Calu3 (cell line): ENCODE measurements at regions of chr19 and their contacts with region 1.

Region 1: GRCh38 chr19:3429581-3430080 is 50.7 kb downstream of the SMIM24 start:
- DNase-seq: peak; percentile 82
- H3K4me3 Mint-ChIP-seq: no peak overlapping the region
- H3K27ac Mint-ChIP-seq: no peak overlapping the region
- H3K4me1 Mint-ChIP-seq: no peaks in the 10 kb centered on the region
- H3K27me3 Mint-ChIP-seq: no peaks in the 10 kb centered on the region
- CTCF ChIP-seq: peak; percentile 90

Region 2: GRCh38 chr19:3234800-3235199 is 194.8 kb before region 1 on chr19:
- CTCF ChIA-PET with region 1: no interaction called
- intact Hi-C with region 1: no loop called
- DNase-seq: peak; percentile 26
- H3K4me3 Mint-ChIP-seq: no peak overlapping the region
- H3K27ac Mint-ChIP-seq: no peak overlapping the region
- H3K4me1 Mint-ChIP-seq: no peaks in the 10 kb centered on the region
- H3K27me3 Mint-ChIP-seq: peaks cover 47% of the 10 kb centered on the region
- CTCF ChIP-seq: no peak

Region 3: DNA sequence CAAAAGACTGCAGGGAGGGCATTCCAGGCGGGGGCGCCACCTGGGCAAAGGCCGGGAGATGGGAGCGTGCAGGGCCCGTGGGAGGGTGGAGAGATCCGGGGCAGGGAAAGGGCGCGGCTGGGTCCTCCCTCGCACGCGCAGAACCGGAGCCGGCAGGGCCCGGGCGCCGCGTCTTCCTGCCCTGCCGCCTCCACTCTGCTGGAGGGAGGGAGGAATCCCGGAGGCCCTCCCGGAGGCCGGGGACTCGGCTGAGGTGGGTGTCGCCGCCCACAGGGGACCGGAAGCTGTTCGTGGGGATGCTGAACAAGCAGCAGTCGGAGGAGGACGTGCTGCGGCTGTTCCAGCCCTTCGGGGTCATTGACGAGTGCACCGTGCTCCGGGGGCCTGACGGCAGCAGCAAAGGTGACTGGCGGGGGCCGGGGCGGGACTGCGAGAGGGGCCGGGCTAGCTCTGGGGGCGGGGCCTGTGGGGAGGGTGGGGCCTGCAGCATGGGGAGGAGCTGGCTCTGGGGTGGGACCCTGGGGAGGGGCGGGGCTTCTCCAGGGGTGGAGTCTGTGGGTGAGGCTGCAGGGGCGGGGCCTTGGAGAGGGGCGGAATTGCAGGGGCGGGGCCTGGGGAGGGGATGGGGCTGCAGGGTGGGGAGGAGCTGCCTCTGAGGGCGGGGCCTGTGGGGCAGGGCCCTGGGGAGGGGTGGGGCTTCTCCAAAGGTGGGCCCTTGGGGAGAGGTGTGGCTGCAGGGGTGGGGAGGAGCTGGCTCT is 153.9 kb before region 1 on chr19:
- CTCF ChIA-PET with region 1: interaction called, 11 read pairs
- intact Hi-C with region 1: no loop called
- DNase-seq: peak; percentile 81
- H3K4me3 Mint-ChIP-seq: peak overlapping the region; percentile 76
- H3K27ac Mint-ChIP-seq: no peak overlapping the region
- H3K4me1 Mint-ChIP-seq: peaks cover 7% of the 10 kb centered on the region
- H3K27me3 Mint-ChIP-seq: peaks cover 81% of the 10 kb centered on the region
- CTCF ChIP-seq: peak; percentile 54